SK-N-SH (cell line): ENCODE measurements at regions of chr1 and their contacts with region 1.

Region 1: DNA sequence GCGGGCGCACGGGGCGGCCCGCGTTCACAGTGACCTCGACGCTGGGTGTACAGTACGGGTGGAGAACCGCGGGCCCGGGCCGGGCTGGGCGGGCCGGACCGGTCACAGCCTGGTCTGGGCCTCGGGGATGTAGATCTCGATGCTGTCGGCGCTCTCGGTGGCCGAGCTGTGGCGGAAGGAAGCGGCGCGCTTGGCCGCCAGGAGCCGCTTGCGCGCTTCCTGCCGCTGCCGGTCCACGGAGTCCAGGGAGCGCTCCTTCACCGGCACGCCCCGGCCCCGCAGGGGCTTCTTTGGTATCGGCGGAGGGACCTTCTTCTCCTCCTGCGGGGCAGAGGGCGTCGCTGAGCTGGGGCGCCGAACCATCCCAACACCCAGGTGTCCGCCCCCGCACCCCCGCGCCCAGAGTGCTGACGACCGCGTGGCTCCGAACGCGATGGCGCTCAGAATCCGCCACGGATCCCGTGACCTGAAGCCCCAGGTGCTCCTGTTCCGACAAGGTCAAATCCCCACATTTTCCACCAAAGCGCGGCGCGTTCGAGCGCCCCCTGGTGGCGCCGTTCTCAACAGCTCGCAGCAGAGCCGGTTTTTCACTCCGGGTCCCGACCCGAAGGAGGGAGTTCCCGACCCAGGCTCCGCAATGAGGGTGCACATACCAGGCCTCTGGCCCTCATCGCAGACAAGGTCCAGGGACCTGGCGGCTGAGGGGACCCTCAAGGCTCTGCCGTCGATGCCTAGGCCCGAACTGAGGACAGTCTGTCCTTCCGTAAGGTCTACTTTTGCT is 6.6 kb upstream of the SMIM12 start:
- DNase-seq: peak; percentile 87
- H3K4me3 ChIP-seq: peak overlapping the region; percentile 14 to 54; a peak in 3 of 4 replicates
- H3K27ac ChIP-seq: no peak overlapping the region
- H3K4me1 ChIP-seq: peaks cover 0 to 3% of the 10 kb centered on the region in 2 experiments; a peak in 1 of 4 replicates
- H3K27me3 ChIP-seq: no peaks in the 10 kb centered on the region
- CTCF ChIP-seq: peak; percentile 84
- EP300 ChIP-seq: no peak
- RAD21 ChIP-seq: peak; percentile 43

Region 2: DNA sequence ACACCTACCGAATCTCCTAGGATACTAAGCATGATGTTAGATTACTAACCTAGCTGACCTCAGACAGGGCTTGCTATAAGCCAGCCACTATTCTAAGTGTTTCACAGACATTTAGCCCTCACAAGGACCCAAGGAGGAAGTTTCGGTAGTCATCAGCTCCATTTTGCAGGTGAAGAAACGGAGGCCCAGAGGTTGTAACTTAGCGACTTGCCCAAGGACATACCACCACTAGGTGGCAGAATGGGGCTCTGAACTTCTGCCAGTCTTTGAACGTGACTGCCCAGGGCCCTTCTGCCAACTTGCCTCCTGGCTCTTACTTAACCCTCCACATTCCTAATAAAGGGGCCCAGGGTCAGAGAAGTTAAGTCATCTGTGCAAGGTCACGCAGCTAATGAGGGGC is 406.0 kb before region 1 on chr1:
- CTCF ChIA-PET with region 1: no interaction called
- POLR2A ChIA-PET with region 1: no interaction called
- DNase-seq: peak; percentile 37
- H3K4me3 ChIP-seq: no peak overlapping the region
- H3K27ac ChIP-seq: no peak overlapping the region
- H3K4me1 ChIP-seq: no peaks in the 10 kb centered on the region
- H3K27me3 ChIP-seq: no peaks in the 10 kb centered on the region
- CTCF ChIP-seq: peak; percentile 23; the same call in 1 of the 2 replicates
- EP300 ChIP-seq: no peak
- RAD21 ChIP-seq: peak; percentile 56

Region 3: DNA sequence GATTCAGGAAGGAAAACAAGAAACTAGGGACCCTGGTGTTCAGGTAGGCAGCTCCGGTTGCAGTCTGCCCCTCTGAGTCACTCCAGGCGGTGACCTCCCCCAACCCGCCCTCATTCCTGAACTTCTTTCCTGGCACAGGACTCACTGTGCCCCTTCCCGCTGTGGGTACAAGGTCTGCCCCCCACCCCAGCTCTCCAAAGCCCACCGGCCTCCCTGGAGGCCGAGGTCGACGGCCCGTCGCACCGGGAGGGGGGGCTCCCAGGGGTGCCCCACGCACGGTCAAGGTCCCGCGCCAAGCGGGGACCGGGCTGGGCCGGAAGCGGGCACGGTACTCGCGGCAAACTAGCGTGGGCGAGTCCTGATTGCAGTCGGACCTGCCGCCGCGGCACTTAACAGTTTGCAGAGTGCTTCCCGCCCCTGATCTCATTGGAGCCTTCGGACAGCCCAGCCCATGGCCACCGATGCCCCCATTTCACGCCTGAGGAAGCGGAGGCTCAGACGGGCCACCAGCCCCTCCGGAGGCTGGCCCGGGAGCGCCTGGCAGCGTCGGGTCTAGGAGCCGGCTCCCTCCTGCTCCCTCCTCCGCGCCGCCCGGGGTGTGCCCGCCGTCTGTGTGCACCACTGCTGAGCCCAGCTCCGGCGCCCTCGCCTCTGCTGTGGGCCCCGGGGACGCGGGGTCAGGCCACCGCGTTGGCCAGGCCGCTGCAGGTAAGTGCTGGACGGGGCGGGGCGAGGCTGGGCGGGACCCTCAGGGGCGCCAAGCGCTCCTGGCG is 84.9 kb before region 1 on chr1 and contains the start of gene GJB3:
- CTCF ChIA-PET with region 1: interaction called, 26 read pairs
- POLR2A ChIA-PET with region 1: no interaction called
- DNase-seq: peak; percentile 83
- H3K4me3 ChIP-seq: peak within 1 kb of the TSS; percentile 23 to 29; a peak in 3 of 4 replicates
- H3K27ac ChIP-seq: no peak within 1 kb of the TSS
- H3K4me1 ChIP-seq: peaks cover 0 to 4% of the 10 kb centered on the region in 2 experiments; a peak in 1 of 4 replicates
- H3K27me3 ChIP-seq: peaks cover 32% of the 10 kb centered on the region
- CTCF ChIP-seq: no peak
- EP300 ChIP-seq: no peak
- RAD21 ChIP-seq: no peak
- polyA plus RNA-seq, gene GJB3: not detected in 2 replicates

Region 4: DNA sequence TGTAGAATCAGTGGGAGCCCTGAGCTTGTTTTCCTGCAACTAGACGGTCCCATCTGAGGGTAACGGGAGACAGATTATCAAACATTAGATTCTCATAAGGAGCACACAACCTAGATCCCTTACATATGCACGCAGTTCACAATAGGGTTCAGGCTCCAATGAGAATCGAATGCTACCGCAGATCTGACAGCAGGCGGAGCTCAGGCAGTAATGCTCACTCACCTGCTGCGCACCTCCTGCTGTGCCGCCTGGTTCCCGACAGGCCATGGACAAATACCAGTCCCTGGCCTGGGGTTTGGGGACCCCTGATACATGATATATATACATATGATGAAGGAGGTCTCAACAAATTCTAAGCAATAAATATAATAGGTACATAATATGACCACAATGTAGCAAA is 13.1 kb after region 1 on chr1:
- CTCF ChIA-PET with region 1: interaction called, 15 read pairs
- POLR2A ChIA-PET with region 1: no interaction called
- DNase-seq: no peak
- H3K4me3 ChIP-seq: no peak overlapping the region
- H3K27ac ChIP-seq: no peak overlapping the region
- H3K4me1 ChIP-seq: no peaks in the 10 kb centered on the region
- H3K27me3 ChIP-seq: peaks cover 5% of the 10 kb centered on the region; the same call in 1 of the 2 replicates
- CTCF ChIP-seq: no peak
- EP300 ChIP-seq: no peak
- RAD21 ChIP-seq: no peak

Region 5: DNA sequence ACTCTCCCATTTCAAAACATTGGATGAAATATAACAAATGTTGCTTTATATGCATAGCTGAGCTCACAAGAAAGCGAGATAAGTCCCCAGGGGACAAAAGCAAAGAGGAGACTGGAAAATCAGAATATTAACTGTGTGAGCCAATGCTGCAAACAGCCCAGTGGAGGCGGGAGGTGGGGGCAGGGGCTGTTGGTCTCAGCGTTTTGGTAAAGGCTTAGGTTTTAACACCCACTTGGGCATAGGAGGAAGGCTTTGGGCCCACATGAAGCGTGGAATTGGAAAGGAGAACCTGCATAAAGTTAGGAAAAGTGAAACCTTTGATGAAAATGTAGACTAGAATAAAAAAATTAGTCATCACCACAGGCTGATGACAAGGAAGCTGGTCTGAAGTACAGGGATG is 23.5 kb after region 1 on chr1:
- CTCF ChIA-PET with region 1: interaction called, 18 read pairs
- POLR2A ChIA-PET with region 1: no interaction called
- DNase-seq: no peak
- H3K4me3 ChIP-seq: no peak overlapping the region
- H3K27ac ChIP-seq: no peak overlapping the region
- H3K4me1 ChIP-seq: no peaks in the 10 kb centered on the region
- H3K27me3 ChIP-seq: no peaks in the 10 kb centered on the region
- CTCF ChIP-seq: no peak
- EP300 ChIP-seq: no peak
- RAD21 ChIP-seq: no peak

Region 6: GRCh38 chr1:35229587-35230360 is 363.6 kb after region 1 on chr1:
- CTCF ChIA-PET with region 1: no interaction called
- POLR2A ChIA-PET with region 1: no interaction called
- DNase-seq: no peak
- H3K4me3 ChIP-seq: no peak overlapping the region
- H3K27ac ChIP-seq: no peak overlapping the region
- H3K4me1 ChIP-seq: no peaks in the 10 kb centered on the region
- H3K27me3 ChIP-seq: no peaks in the 10 kb centered on the region
- CTCF ChIP-seq: no peak
- EP300 ChIP-seq: no peak
- RAD21 ChIP-seq: no peak